GM10248 (cell line): ENCODE measurements at regions of chr4 and their contacts with region 1.

Region 1: DNA sequence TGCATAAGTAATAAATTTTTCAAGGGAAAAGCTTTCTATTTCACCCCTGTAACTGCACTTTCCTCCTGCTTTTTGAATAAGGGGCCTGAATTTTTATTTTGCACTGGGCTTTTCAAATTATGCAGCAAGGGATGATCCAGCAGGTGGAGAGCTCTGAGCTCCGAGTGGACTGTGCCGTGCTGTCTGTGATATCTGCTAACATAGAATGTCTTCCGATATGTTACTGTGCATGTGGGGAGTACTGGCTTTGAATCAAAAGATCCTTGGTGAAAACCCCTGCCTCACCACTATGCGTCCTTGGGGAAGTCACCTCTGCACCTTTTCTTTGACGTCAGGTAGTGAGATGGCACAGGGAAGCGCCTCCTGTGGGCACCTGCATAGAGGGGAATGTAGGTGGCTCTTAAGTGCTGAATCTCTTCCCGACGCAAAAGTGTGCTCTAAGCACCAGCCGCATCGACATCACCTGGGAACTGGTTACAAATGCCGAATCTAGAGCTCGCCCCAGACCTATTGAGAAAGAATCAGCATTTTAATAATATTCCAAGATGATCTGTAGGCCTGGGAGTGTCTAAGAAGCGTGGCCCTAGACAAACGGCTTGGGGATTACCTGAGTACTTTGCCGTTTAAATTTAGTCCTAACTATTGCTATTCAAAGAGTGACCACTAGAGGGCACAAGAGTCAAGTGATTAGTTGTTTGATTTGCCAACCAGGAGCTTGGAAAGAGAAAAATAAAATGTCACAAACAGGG is 19.2 kb upstream of the WFS1 start:
- DNase-seq: peak; percentile 76
- CTCF ChIP-seq: peak; percentile 73

Region 2: DNA sequence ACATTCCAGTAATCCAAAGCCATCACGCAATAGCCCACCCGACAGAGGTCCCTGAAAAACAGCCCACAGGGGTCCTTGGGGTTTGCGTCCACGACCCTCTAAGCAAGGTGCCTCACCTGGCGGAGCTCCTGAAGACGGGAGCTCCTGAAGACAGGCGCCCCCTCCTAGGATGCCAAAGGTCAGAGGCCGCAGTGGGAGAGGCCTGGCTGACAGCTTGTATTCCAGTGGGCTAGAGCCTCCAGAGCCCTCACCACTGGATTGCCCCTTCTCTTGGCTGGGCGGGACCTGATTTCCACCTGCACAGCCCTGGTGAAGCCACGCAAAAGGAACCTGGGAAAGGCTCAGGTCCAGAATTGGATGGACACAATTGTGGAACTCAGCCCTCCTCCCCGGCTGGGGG is 10.4 kb before region 1 on chr4:
- CTCF ChIA-PET with region 1: interaction called, 18 read pairs
- POLR2A ChIA-PET with region 1: no interaction called
- DNase-seq: no peak
- CTCF ChIP-seq: no peak

Region 3: DNA sequence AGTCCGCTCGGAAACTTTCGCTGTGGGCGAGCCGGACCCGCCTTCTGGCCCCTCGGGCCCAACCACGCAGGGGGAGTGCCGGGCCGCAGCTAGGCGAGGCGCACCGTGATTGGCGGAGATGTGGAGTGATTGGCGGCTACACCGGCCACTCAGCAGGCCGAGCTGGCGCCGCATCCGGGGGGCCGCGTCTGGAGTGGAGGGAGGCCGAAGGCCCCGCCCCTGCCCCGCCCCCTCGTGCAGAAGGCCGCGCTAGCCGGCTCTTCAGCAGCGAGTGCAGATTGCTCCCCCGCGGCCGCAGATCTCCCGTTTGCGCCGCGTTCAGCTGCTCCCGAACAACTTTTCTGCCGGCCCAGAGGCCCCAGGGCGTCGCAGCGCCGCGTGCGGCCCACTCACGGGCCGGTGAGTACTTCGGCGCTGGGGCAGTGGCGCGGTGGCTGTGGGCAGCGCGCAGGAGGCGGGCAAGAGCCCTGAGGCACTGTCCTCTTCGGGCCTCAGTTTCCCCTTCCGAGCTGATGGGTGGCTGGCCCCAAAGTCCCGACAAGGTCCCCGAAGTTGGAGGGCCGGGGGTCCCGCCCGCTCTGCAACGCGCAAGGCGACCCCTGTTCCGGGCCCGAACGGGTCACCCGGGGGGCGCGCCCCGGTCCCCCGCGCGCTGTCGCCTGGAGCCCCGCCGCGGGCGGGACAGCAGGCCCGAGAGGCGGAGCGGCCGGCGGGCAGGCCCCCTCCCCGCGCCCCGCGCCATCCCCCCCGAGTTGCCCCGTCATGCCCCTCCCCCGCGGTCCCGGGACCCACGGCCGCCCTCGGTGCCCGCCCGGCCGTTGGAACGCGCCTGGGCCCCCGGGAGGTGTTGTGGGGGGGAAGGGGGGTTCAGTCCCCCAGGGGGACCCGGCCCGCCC is 19.5 kb after region 1 on chr4 and contains the start of gene WFS1:
- CTCF ChIA-PET with region 1: interaction called, 94 read pairs
- POLR2A ChIA-PET with region 1: no interaction called
- DNase-seq: peak; percentile 100
- CTCF ChIP-seq: no peak

Region 4: GRCh38 chr4:6319530-6320150 is 69.2 kb after region 1 on chr4:
- CTCF ChIA-PET with region 1: interaction called, 514 read pairs
- POLR2A ChIA-PET with region 1: no interaction called
- DNase-seq: no peak
- CTCF ChIP-seq: no peak

Region 5: DNA sequence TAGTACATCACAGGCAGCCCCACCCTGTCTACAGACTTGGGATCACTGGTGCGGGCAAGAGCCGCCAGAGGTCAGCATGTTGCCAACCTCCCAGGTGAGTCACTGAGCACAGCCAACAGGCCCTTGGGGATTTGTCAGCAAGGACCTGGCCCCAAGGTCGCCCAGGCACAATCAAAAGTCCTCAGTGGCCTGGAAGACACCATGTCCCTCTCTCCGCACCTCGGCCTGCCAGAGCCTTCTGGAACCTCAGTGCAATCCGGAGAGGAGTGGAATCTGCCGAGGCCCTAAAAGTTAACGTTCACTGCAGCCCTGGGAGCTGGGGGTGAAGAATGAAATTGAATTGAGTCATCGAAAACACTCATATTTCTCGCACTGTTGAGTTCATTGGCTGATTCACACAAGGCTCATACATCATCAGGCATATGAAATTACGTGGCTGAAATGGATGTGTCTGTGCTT is 93.6 kb after region 1 on chr4:
- CTCF ChIA-PET with region 1: interaction called, 12 read pairs
- POLR2A ChIA-PET with region 1: no interaction called
- DNase-seq: no peak
- CTCF ChIP-seq: peak; percentile 16

Region 6: DNA sequence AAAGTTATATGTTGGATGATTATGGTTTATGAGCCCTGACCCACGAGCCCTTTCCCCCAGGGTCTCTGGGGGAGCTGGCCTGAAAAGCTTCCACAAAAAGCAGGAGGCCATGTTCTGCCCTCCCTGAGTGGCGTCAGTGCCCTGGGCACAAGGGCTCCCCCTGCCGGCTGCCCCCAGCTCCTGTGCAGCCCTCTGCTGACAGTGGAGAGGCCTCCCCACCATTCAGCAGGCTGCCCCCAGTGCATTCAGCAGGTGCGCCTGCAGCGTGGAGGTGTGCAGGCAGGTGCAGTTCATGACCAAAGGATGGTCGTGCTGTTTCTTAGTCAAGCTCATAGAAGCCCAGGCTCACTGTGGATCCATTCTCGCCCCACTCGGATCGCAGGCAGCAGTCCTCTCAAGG is 430.8 kb after region 1 on chr4:
- CTCF ChIA-PET with region 1: no interaction called
- POLR2A ChIA-PET with region 1: no interaction called
- DNase-seq: no peak
- CTCF ChIP-seq: no peak

Region 7: DNA sequence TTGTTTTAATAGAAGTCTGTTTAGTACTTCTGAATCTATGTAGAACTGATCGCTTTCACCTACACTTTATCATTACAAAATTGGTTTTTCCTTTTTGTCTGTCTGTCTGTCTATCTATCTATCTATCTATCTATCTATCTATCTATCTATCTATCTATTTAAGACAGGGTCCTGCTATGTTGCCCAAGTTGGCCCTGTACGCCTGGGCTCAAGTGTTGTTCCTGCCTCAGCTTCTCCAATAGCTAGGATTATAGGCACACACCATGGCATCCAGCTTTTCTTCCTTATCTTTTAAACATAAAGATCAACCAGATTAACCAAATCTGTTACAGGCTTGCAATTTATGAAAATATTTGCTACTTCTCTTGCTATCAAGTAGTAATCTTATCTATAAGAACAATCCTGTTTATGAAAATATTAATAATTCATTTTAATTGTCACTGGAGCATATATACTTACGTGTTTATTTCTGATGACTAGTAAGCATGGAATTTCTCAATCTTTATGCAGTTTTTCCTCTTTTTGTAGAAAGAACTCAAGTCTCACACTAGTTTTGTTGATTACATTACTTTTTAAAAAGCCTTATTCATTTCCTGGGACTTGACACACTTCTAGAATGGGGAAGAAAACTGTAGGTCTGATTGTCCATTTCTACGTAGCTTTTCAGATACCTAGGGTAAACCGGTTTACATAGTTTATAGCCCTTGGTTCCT is 556.7 kb after region 1 on chr4:
- CTCF ChIA-PET with region 1: no interaction called
- POLR2A ChIA-PET with region 1: no interaction called
- DNase-seq: no peak
- CTCF ChIP-seq: no peak